ENCODE measurements at regions of chr19 and their contacts with region 1.

Region 1: DNA sequence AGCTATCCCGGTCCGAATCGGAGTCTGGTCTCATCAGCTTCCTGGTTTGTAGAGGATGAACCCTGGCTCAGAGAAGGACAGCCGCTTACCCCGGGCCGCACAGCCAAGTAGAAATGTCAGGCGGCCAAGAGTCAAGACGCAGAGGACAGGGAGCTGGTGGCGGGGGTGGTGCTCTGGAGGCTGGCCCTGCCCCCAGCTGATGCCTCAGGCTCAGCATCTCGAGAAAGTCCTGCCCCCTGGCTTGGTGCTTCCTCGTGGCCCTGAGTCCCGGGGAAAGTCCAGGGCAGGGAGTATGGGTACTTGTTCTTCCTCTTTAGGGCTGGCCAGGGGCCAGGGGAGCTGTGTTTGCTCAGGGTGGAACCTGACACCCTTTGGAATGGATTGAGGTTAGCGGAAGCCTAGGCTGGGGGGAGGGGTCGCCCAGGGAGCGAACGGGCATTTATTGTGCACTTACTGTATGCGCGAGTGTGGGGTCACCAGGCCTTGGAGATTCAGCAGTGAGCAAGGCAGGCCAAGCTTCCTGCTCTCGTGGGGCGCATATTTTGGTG is 2.2 kb downstream of the TJP3 start:
- DNase-seq: no peak
- H3K4me3 Mint-ChIP-seq: no peak overlapping the region
- H3K27ac Mint-ChIP-seq: no peak overlapping the region
- H3K4me1 Mint-ChIP-seq: peaks cover 5% of the 10 kb centered on the region
- H3K27me3 Mint-ChIP-seq: peaks cover 13% of the 10 kb centered on the region

Region 2: DNA sequence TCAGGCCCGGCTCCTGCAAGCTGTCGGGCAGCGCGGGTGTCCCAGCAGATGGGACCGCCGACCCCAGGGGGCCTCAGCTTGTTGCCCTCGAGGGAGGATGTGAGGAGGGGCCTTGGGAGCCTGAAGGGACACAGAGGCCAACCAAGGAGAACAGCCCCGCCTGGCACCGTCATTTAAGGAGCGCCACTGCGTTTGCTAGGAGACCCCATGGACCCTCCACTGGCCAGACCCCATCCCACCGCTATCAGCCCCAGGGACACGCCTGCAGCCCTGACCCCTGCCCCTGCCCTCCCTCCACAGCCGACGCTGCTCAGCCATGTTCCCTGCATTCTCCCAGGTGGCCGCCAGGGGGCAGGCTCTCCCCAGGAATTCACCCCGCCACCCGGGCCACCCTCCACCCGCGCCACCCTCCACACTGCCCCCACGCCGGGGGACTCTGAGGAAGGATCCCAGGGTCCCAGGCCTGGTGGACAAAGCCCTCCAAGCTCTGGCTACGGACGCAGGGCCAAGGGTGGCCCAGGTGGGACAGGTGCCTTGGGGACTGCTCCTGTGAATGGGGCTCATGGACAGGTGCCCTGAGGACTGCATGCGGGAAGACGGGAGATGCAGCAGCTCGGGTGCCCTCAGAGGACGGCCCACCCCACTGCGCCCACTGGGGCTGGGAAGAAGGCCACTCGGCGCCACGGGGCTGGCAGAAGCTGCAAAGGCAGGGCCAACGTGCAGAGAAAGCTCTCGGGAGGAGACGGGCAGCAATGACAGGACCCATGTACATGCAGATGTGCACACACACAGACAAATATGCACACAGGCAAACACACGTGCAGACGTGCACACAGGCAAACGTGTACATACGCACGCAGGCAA is 44.4 kb before region 1 on chr19:
- intact Hi-C with region 1: loop called (anchors 1 kb)
- DNase-seq: peak; percentile 94
- H3K4me3 Mint-ChIP-seq: no peak overlapping the region
- H3K27ac Mint-ChIP-seq: no peak overlapping the region
- H3K4me1 Mint-ChIP-seq: no peaks in the 10 kb centered on the region
- H3K27me3 Mint-ChIP-seq: no peaks in the 10 kb centered on the region